Heart right ventricle (tissue), 16 donors: ENCODE measurements at regions of chr6 and their contacts with region 1.

Region 1: DNA sequence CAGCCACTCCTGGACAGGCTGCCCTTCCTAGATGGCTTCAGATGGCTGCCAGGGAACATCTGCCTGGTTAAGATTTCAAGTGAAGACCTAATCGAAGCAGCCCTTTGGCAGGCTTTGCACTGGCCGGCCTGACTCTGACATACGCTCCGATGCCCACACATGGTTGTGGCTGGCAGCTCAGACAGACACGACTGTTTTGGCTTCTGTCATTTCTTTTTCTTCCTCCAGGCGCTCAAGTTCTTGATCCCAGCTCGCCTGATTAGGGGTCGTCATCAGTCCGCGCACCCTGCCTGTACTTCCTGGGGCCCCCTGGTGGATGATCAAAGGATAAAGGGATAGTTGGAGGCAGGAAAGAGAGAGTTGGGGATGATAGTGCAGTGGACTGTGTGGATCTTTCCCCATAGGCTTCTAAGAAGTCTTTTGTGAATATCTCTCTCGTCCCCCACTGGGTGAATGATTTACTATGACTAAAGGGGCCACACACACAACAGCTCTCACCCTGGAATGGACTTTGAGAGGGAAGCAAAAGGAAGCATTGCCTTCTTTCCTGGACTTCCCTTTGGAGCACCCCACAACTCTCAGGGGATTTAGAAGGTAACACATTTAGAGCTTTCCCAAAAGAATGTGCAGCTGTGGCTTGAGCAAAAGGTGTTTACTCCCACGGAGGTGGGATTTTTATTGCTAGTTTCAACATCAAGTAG is 21.4 kb upstream of the TRAM2 start:
- DNase-seq: peak; percentile 36 to 76
- ATAC-seq: peak; percentile 17 to 78 (median 72)
- H3K4me3 ChIP-seq: peak overlapping the region in 6 of 10 donors; percentile 28 to 41 (median 35)
- H3K27ac ChIP-seq: peak overlapping the region in 6 of 10 donors; percentile 20 to 63 (median 39)
- H3K4me1 ChIP-seq: peaks cover 7 to 48% (median 26%) of the 10 kb centered on the region in 9 donors
- H3K27me3 ChIP-seq: no peaks in the 10 kb centered on the region
- CTCF ChIP-seq: peak; percentile 56 to 78 (median 71)

Region 2: DNA sequence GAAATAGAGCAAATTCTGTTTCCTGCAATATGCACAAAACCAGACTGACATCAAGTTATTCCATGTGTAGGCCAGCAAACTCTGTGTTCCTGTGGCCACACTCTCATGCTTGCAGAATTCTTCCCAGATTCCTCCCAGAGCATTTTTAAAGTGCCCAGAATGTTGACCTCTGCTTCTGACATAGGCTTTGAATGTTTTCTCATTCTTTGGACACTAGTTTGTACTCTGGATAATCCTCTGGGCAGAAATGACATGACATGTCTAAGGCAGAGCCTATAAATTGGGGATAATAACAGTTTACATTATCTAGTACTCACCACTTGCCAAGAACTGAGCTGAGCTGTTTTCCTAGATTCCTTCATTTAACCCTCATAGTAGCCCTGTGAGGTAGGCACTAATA is 187.3 kb before region 1 on chr6:
- intact Hi-C with region 1: loop called in 8 of 10 experiments (anchors 1 to 5 kb)
- DNase-seq: no peak
- ATAC-seq: no peak
- H3K4me3 ChIP-seq: no peak overlapping the region
- H3K27ac ChIP-seq: no peak overlapping the region
- H3K4me1 ChIP-seq: peaks cover 0 to 9% (median 0%) of the 10 kb centered on the region in 9 donors
- H3K27me3 ChIP-seq: peaks cover 0 to 2% (median 0%) of the 10 kb centered on the region in 7 donors
- CTCF ChIP-seq: no peak

Region 3: GRCh38 chr6:52497652-52498408 is 100.4 kb before region 1 on chr6:
- intact Hi-C with region 1: loop called in 2 of 10 experiments (anchors 5 kb)
- DNase-seq: peak in 1 of 2 donors; percentile 75
- ATAC-seq: peak in 6 of 8 donors; percentile 20 to 55 (median 36)
- H3K4me3 ChIP-seq: no peak overlapping the region
- H3K27ac ChIP-seq: peak overlapping the region in 9 of 10 donors; percentile 76 to 90 (median 86)
- H3K4me1 ChIP-seq: peaks cover 13 to 63% (median 42%) of the 10 kb centered on the region in 9 donors
- H3K27me3 ChIP-seq: no peaks in the 10 kb centered on the region
- CTCF ChIP-seq: no peak

Region 4: GRCh38 chr6:52650941-52651340 is 52.7 kb after region 1 on chr6:
- intact Hi-C with region 1: loop called in 2 of 10 experiments (anchors 5 to 10 kb)
- DNase-seq: no peak
- ATAC-seq: peak in 4 of 8 donors; percentile 33 to 56 (median 40)
- H3K4me3 ChIP-seq: no peak overlapping the region
- H3K27ac ChIP-seq: no peak overlapping the region
- H3K4me1 ChIP-seq: peaks cover 0 to 21% (median 0%) of the 10 kb centered on the region in 9 donors
- H3K27me3 ChIP-seq: no peaks in the 10 kb centered on the region
- CTCF ChIP-seq: no peak